Activated naive CD4-positive, alpha-beta T cell treated with anti-CD3 and anti-CD28 coated beads for 36 hours (primary cell): ENCODE measurements at regions of chr19 and their contacts with region 1.

Region 1: DNA sequence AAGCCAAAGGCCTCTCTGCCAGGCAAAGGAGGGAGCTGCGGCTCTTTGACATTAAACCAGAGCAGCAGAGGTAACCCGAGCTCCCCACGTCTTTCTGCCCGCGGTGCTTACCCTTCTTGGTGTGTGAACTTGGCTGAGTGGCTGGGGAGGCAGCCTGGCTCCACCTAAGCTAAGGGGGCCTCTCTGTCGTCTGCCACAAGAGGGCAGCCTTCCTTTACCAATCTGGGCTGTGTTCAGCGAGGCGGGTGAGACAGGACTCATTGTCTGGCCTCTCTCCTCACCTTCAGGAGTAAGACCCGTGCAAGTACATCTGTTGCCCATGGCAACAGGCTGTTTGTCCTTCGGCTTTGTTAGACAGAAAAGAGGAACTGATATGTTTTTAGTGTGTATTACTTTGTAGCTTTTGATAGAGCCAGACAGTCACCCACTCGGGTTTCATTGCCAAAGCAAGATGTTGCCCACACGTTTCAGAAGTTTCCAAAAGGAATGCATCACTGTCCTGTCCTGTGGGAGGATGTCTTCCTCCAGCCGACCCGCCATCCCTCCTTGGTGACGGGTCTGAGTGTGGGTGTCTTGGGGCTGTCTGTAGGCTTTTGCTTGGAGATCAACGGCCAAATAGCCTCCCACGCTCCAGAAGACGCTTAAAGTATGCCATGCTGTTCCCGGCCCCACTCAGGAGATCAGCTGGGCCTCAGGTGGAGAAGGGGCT is 4.6 kb downstream of the POP4 start:
- DNase-seq: peak; percentile 92
- H3K4me3 Mint-ChIP-seq: no peak overlapping the region
- H3K27ac Mint-ChIP-seq: no peak overlapping the region
- H3K4me1 Mint-ChIP-seq: peaks cover 24% of the 10 kb centered on the region
- H3K27me3 Mint-ChIP-seq: no peaks in the 10 kb centered on the region

Region 2: GRCh38 chr19:28737021-28737895 is 873.5 kb before region 1 on chr19:
- CTCF ChIA-PET with region 1: no interaction called
- intact Hi-C with region 1: loop called (anchors 5 kb)
- DNase-seq: peak; percentile 31
- H3K4me3 Mint-ChIP-seq: no peak overlapping the region
- H3K27ac Mint-ChIP-seq: no peak overlapping the region
- H3K4me1 Mint-ChIP-seq: peaks cover 4% of the 10 kb centered on the region
- H3K27me3 Mint-ChIP-seq: peaks cover 7% of the 10 kb centered on the region

Region 3: GRCh38 chr19:29560313-29561075 is 50.2 kb before region 1 on chr19:
- CTCF ChIA-PET with region 1: no interaction called
- intact Hi-C with region 1: no loop called
- DNase-seq: no peak
- H3K4me3 Mint-ChIP-seq: no peak overlapping the region
- H3K27ac Mint-ChIP-seq: no peak overlapping the region
- H3K4me1 Mint-ChIP-seq: peaks cover 9% of the 10 kb centered on the region
- H3K27me3 Mint-ChIP-seq: peaks cover 25% of the 10 kb centered on the region

Region 4: DNA sequence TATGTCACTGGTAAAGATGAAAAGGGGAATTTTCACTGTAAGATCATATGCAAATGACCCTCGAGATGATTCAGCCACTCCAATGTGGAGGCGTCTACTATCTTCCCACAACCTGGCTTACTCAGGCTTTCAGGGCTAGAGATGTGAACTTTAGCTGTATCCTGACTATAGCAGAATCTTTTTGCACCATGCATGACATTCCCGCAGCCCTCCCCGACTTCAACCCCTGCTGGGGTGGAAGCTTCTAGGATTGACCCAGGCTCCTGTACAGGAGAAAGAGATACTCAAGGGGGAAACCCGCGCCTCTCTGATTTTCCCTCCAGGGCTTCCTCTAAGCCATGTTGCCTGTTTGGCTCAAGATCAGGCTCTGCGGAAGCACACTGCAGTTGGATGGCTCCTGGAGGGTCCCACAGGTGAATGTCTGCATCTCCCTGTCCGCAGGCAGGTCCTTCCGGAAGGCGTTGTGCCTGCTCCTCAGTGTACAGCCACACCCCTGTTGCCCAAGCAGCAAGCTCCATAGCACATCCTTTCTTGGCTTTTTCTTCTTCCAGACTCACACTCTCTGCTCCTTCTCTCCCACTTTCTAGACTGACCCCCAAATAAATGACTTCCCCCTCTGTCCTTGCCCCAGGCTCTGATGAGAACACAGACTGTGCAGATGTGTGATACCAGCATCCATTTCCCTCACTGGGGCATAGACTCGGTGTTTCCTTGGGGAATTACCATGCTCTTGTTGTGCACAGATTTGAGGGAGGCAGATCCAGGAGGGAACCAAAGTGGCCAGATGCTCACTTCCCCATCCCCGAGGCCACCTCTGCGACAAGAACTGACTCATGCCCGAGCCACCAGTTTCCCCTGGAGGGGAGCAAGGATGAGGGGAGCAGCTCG is 33.7 kb before region 1 on chr19:
- CTCF ChIA-PET with region 1: interaction called, 6 read pairs
- intact Hi-C with region 1: loop called (anchors 1 kb)
- DNase-seq: peak; percentile 70
- H3K4me3 Mint-ChIP-seq: no peak overlapping the region
- H3K27ac Mint-ChIP-seq: no peak overlapping the region
- H3K4me1 Mint-ChIP-seq: peaks cover 24% of the 10 kb centered on the region
- H3K27me3 Mint-ChIP-seq: peaks cover 50% of the 10 kb centered on the region

Region 5: GRCh38 chr19:29665215-29665825 is 54.6 kb after region 1 on chr19 and contains the start of gene PLEKHF1:
- CTCF ChIA-PET with region 1: interaction called, 102 read pairs
- intact Hi-C with region 1: loop called (anchors 1 kb)
- DNase-seq: peak; percentile 85
- H3K4me3 Mint-ChIP-seq: peak within 1 kb of the TSS; percentile 97
- H3K27ac Mint-ChIP-seq: peak within 1 kb of the TSS; percentile 96
- H3K4me1 Mint-ChIP-seq: peaks cover 71% of the 10 kb centered on the region
- H3K27me3 Mint-ChIP-seq: no peaks in the 10 kb centered on the region
- total RNA-seq, gene PLEKHF1: 20.7 to 21.0 TPM

Region 6: DNA sequence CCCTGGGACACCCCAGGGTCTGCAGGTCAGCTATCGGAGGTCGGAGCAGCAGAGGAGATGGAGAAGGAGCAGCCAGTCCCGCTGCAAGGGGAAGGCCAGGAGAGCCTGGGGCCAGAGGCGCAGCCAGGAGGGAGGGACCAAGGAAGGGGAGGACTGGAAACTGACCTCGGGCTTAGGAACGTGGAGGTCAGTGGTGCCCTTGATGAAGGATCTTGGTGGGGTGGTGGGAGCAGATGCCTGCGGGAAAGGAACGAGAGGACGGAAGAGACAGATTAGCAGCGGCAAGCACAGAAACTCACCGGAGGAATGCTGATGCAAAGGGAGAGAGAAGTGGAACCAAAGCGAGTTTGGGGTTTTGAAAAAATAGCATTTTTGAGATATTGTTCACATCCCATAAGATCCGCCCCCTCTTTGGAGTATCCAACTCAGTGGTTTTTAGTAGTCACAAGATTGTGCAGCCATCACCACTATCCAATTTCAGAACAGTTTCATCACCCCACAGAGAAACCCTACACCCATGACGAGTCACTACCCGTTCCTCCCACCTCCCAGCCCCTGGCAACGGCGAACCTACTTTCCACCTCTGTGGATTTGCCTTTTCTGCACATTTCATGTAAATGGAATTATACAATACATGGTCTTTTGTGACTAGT is 76.7 kb after region 1 on chr19:
- CTCF ChIA-PET with region 1: interaction called, 147 read pairs
- intact Hi-C with region 1: loop called (anchors 1 kb)
- DNase-seq: peak; percentile 57
- H3K4me3 Mint-ChIP-seq: no peak overlapping the region
- H3K27ac Mint-ChIP-seq: peak overlapping the region; percentile 42
- H3K4me1 Mint-ChIP-seq: peaks cover 33% of the 10 kb centered on the region
- H3K27me3 Mint-ChIP-seq: no peaks in the 10 kb centered on the region

Region 7: GRCh38 chr19:29844891-29845572 is 234.3 kb after region 1 on chr19:
- CTCF ChIA-PET with region 1: no interaction called
- intact Hi-C with region 1: loop called (anchors 1 kb)
- DNase-seq: peak; percentile 96
- H3K4me3 Mint-ChIP-seq: peak overlapping the region; percentile 83
- H3K27ac Mint-ChIP-seq: peak overlapping the region; percentile 79
- H3K4me1 Mint-ChIP-seq: peaks cover 10% of the 10 kb centered on the region
- H3K27me3 Mint-ChIP-seq: no peaks in the 10 kb centered on the region